GM12878 (cell line): ENCODE measurements at regions of chr17 and their contacts with region 1.

Region 1: DNA sequence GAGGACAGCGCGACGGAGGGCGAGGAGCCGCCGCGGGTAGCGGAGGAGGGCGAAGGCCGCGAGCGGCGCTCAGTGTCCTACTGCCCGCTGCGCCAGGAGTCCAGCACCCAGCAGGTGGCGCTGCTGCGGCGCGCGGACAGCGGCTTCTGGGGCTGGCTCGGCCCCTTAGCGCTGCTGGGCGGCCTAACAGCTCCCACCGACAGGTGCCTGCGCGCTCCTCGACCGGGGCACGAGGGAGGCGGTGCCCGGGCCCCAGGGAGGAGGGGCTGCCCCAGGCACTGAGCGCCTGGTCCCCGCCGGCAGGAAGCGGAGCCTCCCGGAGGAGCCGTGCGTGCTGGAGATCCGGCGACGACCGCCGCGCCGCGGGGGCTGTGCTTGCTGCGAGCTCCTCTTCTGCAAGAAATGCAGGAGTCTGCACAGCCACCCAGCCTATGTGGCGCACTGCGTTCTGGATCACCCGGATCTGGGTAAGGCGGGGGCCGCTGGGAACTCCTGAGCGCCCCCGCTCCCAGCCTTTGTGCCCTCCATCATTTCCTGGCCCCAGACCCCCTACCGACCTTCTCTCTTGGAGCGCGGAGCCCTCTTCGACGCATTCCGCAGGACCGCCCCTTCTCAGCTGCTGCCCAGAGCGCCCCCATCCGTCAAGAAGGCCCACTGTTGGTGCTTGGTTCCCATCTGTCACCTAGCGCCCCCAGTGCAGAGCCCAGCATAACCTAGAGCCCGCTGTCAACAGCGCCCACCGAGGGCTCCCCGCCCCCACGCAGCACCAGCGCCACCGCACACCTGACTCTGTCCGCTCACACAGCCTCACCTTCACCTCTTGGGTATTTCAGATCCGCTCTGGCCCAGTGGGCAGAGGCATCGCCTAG is 3.7 kb downstream of the C17orf50 start:
- DNase-seq: peak; percentile 49
- ATAC-seq: peak; percentile 98
- H3K4me3 ChIP-seq: peak overlapping the region; percentile 63; the same call in 1 of the 2 replicates
- H3K27ac ChIP-seq: no peak overlapping the region
- H3K4me1 ChIP-seq: peaks cover 5% of the 10 kb centered on the region
- H3K27me3 ChIP-seq: peaks cover 0 to 6% of the 10 kb centered on the region in 2 experiments
- CTCF ChIP-seq: peak; percentile 89 to 98 (median 96)
- EP300 ChIP-seq: no peak
- POLR2A ChIP-seq: no peak
- RAD21 ChIP-seq: peak; percentile 73

Region 2: DNA sequence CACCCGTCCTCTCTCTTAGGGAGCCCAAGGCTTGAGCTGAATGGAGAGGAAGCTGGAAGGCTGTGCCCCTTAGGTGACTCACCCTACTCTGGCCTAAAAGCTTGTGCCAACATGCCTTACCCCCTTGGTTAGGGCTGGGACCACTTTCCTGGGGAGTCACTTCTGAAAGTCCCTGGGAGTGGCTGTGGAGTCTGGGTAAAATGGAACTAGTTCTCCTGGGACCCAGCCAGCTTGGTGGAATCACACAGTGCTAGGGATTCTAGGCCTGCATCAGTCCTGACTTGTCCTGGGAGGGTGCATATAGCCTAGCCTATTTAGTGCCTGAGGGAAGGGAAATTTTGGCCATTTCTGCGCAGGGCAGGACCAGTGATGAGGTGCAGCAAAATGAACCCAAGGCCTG is 20.5 kb after region 1 on chr17:
- CTCF ChIA-PET with region 1: interaction called, 12 read pairs
- POLR2A ChIA-PET with region 1: no interaction called
- RAD21 ChIA-PET with region 1: interaction called, 4 read pairs
- SMC1A ChIA-PET with region 1: interaction called, 4 read pairs
- in situ Hi-C with region 1: no loop called
- intact Hi-C with region 1: no loop called
- DNase-seq: no peak
- ATAC-seq: no peak
- H3K4me3 ChIP-seq: no peak overlapping the region
- H3K27ac ChIP-seq: no peak overlapping the region
- H3K4me1 ChIP-seq: no peaks in the 10 kb centered on the region
- H3K27me3 ChIP-seq: peaks cover 2 to 6% of the 10 kb centered on the region in 2 experiments; a peak in 2 of 4 replicates
- CTCF ChIP-seq: no peak
- EP300 ChIP-seq: no peak
- POLR2A ChIP-seq: no peak
- RAD21 ChIP-seq: no peak

Region 3: GRCh38 chr17:35808962-35809854 is 44.9 kb after region 1 on chr17 and contains the start of gene TAF15:
- CTCF ChIA-PET with region 1: interaction called, 220 read pairs
- POLR2A ChIA-PET with region 1: interaction called, 24 read pairs
- RAD21 ChIA-PET with region 1: interaction called, 50 read pairs
- SMC1A ChIA-PET with region 1: interaction called, 33 read pairs
- in situ Hi-C with region 1: loop called (anchors 5 kb)
- intact Hi-C with region 1: loop called (anchors 2 kb)
- DNase-seq: peak; percentile 97
- ATAC-seq: peak; percentile 96
- H3K4me3 ChIP-seq: peak within 1 kb of the TSS; percentile 80
- H3K27ac ChIP-seq: peak within 1 kb of the TSS; percentile 94
- H3K4me1 ChIP-seq: peaks cover 4% of the 10 kb centered on the region
- H3K27me3 ChIP-seq: no peaks in the 10 kb centered on the region
- CTCF ChIP-seq: peak; percentile 81 to 91 (median 89)
- EP300 ChIP-seq: peak in 1 of 2 experiments; percentile 40; a peak in 1 of 4 replicates
- POLR2A ChIP-seq: peak; percentile 97
- RAD21 ChIP-seq: peak; percentile 34
- polyA plus RNA-seq, gene TAF15: 9.5 to 17.1 TPM

Region 4: GRCh38 chr17:35819456-35819855 is 55.1 kb after region 1 on chr17:
- CTCF ChIA-PET with region 1: interaction called, 14 read pairs
- POLR2A ChIA-PET with region 1: interaction called, 3 read pairs
- RAD21 ChIA-PET with region 1: interaction called, 3 read pairs
- SMC1A ChIA-PET with region 1: interaction called, 3 read pairs
- in situ Hi-C with region 1: no loop called
- intact Hi-C with region 1: no loop called
- DNase-seq: no peak
- ATAC-seq: no peak
- H3K4me3 ChIP-seq: no peak overlapping the region
- H3K27ac ChIP-seq: no peak overlapping the region
- H3K4me1 ChIP-seq: no peaks in the 10 kb centered on the region
- H3K27me3 ChIP-seq: no peaks in the 10 kb centered on the region
- CTCF ChIP-seq: no peak
- EP300 ChIP-seq: no peak
- POLR2A ChIP-seq: no peak
- RAD21 ChIP-seq: no peak